Activated B cell treated with CpG ODN at 0.5 μM for 24 hours (primary cell): ENCODE measurements at regions of chr19 and their contacts with region 1.

Region 1: DNA sequence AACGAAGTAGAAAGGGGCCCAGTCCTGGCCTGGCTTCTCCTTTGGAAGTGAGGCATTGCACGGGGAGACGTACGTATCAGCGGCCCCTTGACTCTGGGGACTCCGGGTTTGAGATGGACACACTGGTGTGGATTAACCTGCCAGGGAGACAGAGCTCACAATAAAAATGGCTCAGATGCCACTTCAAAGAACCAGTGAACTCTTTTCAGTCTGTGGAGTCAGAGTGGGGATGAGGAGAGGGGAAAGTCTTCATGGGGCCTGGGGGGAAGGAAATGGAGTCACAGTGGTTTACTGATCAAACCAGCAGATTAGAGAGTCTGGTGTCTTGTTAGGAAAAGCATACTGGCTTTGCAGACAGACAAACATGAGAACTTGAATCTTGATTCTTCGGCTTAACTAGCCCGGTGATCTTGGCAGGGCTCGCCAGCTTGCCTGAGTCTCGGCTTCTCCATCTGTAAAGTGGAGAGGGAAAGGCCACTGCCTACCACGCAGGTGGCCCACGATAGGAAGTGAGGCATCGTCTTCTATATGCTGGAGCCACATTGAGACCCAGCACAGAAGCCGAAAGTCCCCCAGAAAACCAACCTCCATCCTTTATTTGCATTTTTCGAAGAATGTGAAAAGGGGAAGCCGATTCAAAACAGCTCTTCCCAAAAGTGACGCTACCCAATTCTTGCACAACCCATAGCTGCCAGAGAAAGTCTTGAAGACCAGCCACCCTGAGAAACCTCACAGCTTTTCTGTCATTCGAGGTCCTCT is at the start of gene FFAR1:
- DNase-seq: peak; percentile 64
- ATAC-seq: peak; percentile 66
- H3K4me3 Mint-ChIP-seq: peak within 1 kb of the TSS; percentile 74
- H3K27ac Mint-ChIP-seq: peak within 1 kb of the TSS; percentile 98
- H3K4me1 Mint-ChIP-seq: peaks cover 84% of the 10 kb centered on the region
- H3K27me3 Mint-ChIP-seq: peaks cover 2% of the 10 kb centered on the region
- CTCF ChIP-seq: no peak
- total RNA-seq, gene FFAR1: 5.1 and 6.0 TPM in 2 replicates

Region 2: DNA sequence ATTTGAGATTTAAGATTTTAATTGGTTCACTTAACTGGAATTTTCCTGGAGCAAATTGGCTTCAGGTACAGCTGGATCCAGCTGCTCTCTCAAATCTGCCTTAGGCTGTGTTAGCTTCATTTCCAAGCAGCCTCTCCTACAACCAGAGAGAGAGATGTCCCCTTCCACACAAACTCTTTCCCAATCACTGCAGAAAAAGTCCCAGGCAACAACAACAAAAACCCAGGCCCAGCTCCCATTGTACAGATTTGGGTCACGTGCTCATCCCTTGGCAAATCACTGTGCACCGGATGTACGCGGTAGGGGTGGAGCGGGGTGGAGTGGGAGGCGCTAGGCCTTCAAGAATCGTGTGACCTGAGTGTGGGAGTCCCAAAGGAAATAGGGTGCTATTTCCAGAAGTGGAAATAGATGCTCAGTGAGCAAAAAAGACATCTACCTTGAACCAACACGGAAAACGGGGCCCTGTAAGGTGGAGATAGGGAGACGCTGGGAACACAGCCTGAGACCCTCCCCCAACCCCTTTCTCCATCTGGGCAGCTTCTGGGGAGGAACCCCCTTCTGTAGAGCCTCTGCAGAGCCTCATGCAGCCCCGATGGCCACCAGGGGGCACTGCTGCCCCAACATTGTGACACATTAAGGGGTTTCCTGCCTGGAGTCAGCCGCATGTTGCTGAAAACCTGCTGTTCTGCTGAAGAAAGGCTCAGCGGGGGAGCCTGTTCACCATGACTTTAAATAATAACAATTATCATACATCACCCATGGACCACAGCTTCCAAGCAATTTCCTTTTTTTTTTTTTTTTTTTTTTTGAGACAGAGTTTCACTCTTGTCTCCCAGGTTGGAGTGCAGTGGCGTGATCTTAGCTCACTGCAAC is 280.4 kb before region 1 on chr19:
- CTCF ChIA-PET with region 1: no interaction called
- POLR2A ChIA-PET with region 1: interaction called, 7 read pairs
- intact Hi-C with region 1: loop called (anchors 10 kb)
- DNase-seq: peak; percentile 88
- ATAC-seq: peak; percentile 91
- H3K4me3 Mint-ChIP-seq: peak overlapping the region; percentile 24
- H3K27ac Mint-ChIP-seq: peak overlapping the region; percentile 41
- H3K4me1 Mint-ChIP-seq: peaks cover 30% of the 10 kb centered on the region
- H3K27me3 Mint-ChIP-seq: no peaks in the 10 kb centered on the region
- CTCF ChIP-seq: no peak

Region 3: DNA sequence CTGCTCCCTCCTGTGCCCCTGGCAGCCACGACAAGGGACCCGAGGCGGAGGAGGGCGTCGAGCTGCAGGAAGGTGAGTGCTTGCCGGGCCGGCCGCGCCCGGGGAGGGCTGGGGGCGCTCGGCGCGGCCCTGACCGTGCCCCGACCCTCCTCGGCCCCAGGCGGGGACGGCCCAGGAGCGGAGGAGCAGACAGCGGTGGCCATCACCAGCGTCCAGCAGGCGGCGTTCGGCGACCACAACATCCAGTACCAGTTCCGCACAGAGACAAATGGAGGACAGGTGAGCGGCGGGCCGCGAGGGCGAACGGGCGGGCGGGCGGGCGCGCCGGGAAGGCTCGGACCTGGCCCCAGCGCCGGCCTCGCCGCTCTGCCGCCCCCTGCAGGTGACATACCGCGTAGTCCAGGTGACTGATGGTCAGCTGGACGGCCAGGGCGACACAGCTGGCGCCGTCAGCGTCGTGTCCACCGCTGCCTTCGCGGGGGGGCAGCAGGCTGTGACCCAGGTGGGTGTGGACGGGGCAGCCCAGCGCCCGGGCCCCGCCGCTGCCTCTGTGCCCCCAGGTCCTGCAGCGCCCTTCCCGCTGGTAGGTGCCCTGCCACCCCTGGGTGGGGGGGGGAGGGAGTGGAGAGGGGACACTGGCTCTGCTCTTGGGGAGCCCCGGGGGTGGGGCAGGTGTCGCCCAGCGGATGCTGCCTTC is 77.8 kb before region 1 on chr19:
- CTCF ChIA-PET with region 1: interaction called, 7 read pairs
- POLR2A ChIA-PET with region 1: interaction called, 61 read pairs
- intact Hi-C with region 1: loop called (anchors 1 kb)
- DNase-seq: peak; percentile 81
- ATAC-seq: peak; percentile 70
- H3K4me3 Mint-ChIP-seq: peak overlapping the region; percentile 66
- H3K27ac Mint-ChIP-seq: peak overlapping the region; percentile 12
- H3K4me1 Mint-ChIP-seq: peaks cover 61% of the 10 kb centered on the region
- H3K27me3 Mint-ChIP-seq: no peaks in the 10 kb centered on the region
- CTCF ChIP-seq: no peak

Region 4: DNA sequence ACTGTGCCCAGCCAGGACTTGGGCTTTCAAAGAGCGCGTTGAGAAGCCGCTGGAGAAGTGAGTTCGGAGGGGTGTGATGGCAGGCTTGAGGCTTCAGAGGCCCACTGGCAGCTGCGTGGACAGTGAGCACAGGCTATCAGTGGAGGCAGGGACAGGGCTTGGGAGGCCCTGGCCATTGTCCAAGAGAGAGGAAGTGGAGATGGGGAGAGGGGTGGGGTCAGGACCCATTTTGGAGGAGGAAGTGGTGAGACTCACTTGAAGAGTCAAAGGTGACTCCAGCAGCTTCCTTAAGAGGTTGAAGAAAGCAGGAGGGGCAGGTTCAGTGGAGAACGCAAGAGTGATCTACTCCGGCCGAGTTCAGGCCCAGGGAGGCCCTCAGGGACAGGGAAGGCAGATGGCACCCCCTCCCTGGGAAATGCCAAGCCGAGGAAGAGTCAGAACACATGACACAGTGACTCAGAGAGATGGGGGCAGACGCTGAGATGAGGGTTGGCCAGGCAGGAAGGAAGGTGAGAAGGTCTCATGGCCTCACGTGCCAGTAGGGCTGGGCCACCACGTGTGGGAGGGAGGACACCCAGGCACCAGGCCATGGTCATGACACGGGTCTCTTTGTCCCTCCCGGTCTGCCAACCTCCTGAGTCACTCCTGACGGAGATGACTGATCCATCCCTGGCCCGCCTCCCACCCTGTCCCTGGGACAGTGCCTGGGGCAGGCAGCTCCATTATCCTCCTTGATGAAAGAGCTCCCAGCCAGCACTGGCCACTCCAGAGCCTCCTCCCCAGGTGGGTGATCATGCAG is 28.5 kb before region 1 on chr19:
- CTCF ChIA-PET with region 1: interaction called, 3 read pairs
- POLR2A ChIA-PET with region 1: interaction called, 645 read pairs
- intact Hi-C with region 1: loop called (anchors 1 kb)
- DNase-seq: no peak
- ATAC-seq: peak; percentile 26
- H3K4me3 Mint-ChIP-seq: peak overlapping the region; percentile 71
- H3K27ac Mint-ChIP-seq: peak overlapping the region; percentile 96
- H3K4me1 Mint-ChIP-seq: peaks cover 89% of the 10 kb centered on the region
- H3K27me3 Mint-ChIP-seq: no peaks in the 10 kb centered on the region
- CTCF ChIP-seq: no peak

Region 5: GRCh38 chr19:35404879-35405622 is 57.7 kb after region 1 on chr19:
- CTCF ChIA-PET with region 1: no interaction called
- POLR2A ChIA-PET with region 1: no interaction called
- intact Hi-C with region 1: no loop called
- DNase-seq: no peak
- ATAC-seq: no peak
- H3K4me3 Mint-ChIP-seq: no peak overlapping the region
- H3K27ac Mint-ChIP-seq: no peak overlapping the region
- H3K4me1 Mint-ChIP-seq: peaks cover 17% of the 10 kb centered on the region
- H3K27me3 Mint-ChIP-seq: no peaks in the 10 kb centered on the region
- CTCF ChIP-seq: no peak

Region 6: DNA sequence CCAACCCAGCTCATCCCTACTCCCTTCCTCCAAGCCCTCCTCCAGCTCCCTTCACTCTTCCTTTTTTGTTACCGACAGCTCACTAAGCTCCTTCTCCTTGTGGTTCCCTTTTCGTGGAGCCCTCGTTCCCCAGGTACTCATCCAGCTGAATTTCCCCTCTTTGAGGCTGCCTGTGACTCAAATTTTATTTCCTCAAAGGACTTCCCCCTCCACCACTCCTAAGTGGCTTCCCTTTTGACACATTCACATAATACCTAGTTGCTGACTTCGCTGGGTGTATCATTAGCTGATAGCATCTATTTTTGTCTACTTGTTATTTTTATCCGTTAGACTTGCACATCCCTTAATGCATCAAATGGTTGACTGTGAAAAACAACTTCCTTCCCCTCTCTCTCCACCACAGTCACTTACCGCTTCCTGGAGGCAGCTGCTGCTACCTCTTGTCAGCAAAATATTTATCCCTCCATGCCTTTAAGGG is 115.2 kb after region 1 on chr19:
- CTCF ChIA-PET with region 1: interaction called, 99 read pairs
- POLR2A ChIA-PET with region 1: interaction called, 76 read pairs
- intact Hi-C with region 1: loop called (anchors 1 kb)
- DNase-seq: peak; percentile 35
- ATAC-seq: peak; percentile 76
- H3K4me3 Mint-ChIP-seq: peak overlapping the region; percentile 76
- H3K27ac Mint-ChIP-seq: peak overlapping the region; percentile 85
- H3K4me1 Mint-ChIP-seq: peaks cover 64% of the 10 kb centered on the region
- H3K27me3 Mint-ChIP-seq: no peaks in the 10 kb centered on the region
- CTCF ChIP-seq: no peak

Region 7: GRCh38 chr19:35710784-35711723 is 363.7 kb after region 1 on chr19:
- CTCF ChIA-PET with region 1: no interaction called
- POLR2A ChIA-PET with region 1: no interaction called
- intact Hi-C with region 1: loop called (anchors 5 kb)
- DNase-seq: peak; percentile 53
- ATAC-seq: peak; percentile 56
- H3K4me3 Mint-ChIP-seq: peak overlapping the region; percentile 62
- H3K27ac Mint-ChIP-seq: peak overlapping the region; percentile 96
- H3K4me1 Mint-ChIP-seq: peaks cover 59% of the 10 kb centered on the region
- H3K27me3 Mint-ChIP-seq: no peaks in the 10 kb centered on the region
- CTCF ChIP-seq: no peak